Panc1 (cell line): ENCODE measurements at regions of chr7 and their contacts with region 1.

Region 1: GRCh38 chr7:5382281-5382892 is 41.2 kb downstream of the TNRC18 start:
- DNase-seq: no peak
- ATAC-seq: peak; percentile 51
- H3K4me3 ChIP-seq: no peak overlapping the region
- H3K27ac ChIP-seq: no peak overlapping the region
- H3K4me1 ChIP-seq: peaks cover 13% of the 10 kb centered on the region
- H3K27me3 ChIP-seq: no peaks in the 10 kb centered on the region
- CTCF ChIP-seq: no peak

Region 2: GRCh38 chr7:4136501-4137110 is 1245.8 kb before region 1 on chr7:
- CTCF ChIA-PET with region 1: interaction called, 11 read pairs
- POLR2A ChIA-PET with region 1: no interaction called
- in situ Hi-C with region 1: no loop called
- intact Hi-C with region 1: no loop called
- DNase-seq: no peak
- ATAC-seq: no peak
- H3K4me3 ChIP-seq: no peak overlapping the region
- H3K27ac ChIP-seq: no peak overlapping the region
- H3K4me1 ChIP-seq: no peaks in the 10 kb centered on the region
- H3K27me3 ChIP-seq: no peaks in the 10 kb centered on the region
- CTCF ChIP-seq: no peak

Region 3: DNA sequence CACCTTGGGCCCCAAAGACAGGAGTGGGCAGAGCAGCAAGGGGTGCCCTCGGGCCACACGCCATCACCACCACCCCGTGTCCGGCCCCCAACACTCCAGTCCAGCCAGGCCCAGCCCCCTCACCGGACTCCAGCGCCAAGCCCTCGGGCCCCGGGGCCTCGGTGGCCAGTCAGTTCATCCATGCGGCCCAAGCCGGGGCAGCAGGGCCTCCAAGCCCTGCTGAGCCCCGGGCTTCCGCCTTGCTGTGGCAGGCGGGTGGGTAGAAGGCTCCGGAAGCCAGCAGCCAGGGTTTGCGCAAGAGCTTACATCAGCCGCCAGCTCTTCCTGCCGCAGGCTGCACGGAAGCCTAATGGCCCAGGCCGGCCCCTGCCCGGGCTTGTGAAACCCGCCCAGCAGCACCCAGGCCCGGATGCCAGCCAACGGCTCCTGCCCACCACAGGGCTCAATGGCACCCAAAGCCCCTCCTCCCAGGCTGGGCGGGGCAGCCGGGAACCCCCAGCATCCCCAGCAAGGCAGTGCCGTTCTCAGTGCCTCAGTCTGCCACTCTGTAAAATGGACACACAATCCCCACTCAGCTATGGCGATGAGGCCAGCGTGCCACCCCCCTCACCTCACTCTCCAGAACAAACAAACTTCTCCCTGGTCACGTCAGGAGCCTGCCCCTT is 14.7 kb after region 1 on chr7:
- CTCF ChIA-PET with region 1: interaction called, 14 read pairs
- POLR2A ChIA-PET with region 1: interaction called, 12 read pairs
- in situ Hi-C with region 1: no loop called
- intact Hi-C with region 1: no loop called
- DNase-seq: no peak
- ATAC-seq: peak; percentile 86
- H3K4me3 ChIP-seq: peak overlapping the region; percentile 47 to 63
- H3K27ac ChIP-seq: peak overlapping the region; percentile 94
- H3K4me1 ChIP-seq: peaks cover 29% of the 10 kb centered on the region
- H3K27me3 ChIP-seq: no peaks in the 10 kb centered on the region
- CTCF ChIP-seq: no peak